Astrocyte of the cerebellum (primary cell): ENCODE measurements at regions of chr13 and their contacts with region 1.

Region 1: DNA sequence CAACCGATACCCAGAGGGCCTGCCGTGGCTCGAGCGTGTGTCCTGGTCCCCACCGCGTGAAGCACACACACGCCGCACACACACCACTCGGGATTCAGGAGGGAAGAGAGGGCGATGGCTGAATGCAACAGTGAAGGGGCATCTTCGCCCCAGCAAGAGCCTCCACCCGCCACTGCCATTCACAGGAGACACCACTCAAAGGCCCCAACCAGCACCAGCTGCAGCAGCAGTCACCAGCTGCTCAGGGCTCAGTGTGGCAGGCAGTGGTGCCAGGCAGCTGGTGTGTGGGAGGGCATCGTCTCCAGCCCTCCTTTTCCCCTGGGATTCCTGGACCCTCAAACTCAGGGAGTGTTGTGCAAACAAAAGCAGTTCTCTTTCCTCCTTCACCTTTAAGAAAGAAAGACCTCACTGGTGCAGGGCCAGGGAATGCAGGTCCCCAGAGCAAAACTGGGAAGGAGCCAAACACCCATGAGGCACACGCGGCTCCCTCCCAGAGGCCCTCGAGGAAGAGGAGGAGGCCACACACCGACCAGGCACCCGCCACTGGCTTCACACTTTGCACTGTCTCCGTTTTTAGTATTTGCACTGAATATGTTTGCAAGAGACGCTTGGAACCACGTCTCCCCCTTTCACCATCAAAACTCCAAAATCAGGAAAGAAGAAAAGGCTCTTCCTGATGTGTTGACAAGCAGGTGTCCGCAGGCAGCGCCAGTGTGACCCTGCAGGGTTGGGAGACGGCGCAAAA is 26.5 kb upstream of the F7 start:
- DNase-seq: no peak
- H3K4me3 ChIP-seq: no peak overlapping the region
- CTCF ChIP-seq: no peak

Region 2: GRCh38 chr13:113123226-113124201 is 44.5 kb after region 1 on chr13:
- in situ Hi-C with region 1: no loop called
- DNase-seq: no peak
- H3K4me3 ChIP-seq: no peak overlapping the region
- CTCF ChIP-seq: peak; percentile 24

Region 3: DNA sequence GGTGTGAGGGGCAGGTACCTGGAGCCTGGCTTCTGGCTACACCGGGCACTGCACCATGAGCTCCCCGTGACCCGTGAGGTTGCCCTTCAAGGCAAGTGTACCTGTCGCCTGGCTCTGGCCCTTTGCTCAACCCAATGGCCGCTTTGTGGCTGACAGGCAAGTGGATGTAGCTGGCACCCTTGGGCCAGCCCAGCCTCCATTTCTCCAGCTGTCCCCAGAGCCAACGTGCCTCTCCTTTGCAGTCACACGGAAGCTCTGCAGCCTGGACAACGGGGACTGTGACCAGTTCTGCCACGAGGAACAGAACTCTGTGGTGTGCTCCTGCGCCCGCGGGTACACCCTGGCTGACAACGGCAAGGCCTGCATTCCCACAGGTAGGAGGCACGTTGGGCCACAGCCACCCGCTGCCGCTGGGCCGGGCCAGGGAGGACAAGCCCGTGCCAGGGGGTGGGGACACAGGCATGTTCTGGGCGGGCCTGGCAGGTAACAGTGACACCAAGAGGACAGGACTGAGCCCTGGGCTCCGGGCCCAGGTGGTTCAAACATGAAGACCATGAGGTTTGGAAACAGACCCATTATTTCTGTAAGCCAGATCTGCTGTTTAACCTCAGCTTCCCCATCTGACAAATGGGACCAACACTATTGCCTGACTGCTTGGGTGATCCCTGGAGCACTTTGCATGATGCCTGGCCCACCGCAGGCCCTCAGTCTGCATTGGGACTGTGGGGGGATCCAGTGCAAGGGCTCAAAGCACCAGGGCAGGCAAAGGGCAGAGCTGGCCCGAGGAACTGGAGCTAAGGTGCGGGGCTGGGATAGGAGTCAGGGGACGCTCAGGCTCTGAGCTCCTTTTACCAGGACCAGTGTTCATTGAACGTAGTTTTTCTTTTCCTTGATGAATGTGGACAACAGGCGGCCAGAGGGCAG is 61.9 kb after region 1 on chr13:
- in situ Hi-C with region 1: loop called (anchors 10 kb)
- DNase-seq: no peak
- H3K4me3 ChIP-seq: no peak overlapping the region
- CTCF ChIP-seq: no peak